Body of pancreas (tissue), 4 donors: ENCODE measurements at regions of chr5 and their contacts with region 1.

Region 1: DNA sequence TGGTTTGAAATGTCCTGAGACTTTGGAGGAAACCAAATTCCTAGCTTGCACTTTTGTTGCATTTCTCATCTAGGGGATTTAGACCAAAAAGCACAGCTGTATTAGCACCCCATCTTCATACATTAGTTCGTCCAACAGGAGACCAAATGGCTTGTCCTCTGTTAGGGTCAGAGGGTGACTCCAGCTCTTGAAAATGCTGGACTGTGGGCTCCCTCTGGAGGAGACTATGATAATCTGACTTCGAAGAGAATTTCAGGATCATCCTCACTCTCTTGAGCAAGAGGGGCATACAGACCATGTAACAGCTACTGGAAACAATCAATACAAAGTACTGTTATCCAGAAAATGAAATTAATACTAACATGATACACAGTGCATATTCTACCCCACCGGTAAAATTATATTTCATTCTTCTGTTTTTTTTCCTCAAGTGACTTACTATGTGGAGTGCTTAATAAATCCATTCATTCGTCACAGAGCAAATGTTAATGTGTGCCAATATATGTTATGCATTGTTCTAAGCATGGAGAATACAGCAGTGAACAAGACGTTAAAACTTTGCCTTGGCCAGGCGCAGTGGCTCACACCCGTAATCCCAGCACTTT is 63.7 kb upstream of the PPP2CA start:
- DNase-seq: peak; percentile 51 to 73 (median 56)
- ATAC-seq: peak; percentile 85
- H3K4me3 ChIP-seq: no peak overlapping the region
- H3K27ac ChIP-seq: no peak overlapping the region
- H3K4me1 ChIP-seq: no peaks in the 10 kb centered on the region
- H3K27me3 ChIP-seq: no peaks in the 10 kb centered on the region
- CTCF ChIP-seq: peak; percentile 35 to 86 (median 79)
- POLR2A ChIP-seq: no peak

Region 2: DNA sequence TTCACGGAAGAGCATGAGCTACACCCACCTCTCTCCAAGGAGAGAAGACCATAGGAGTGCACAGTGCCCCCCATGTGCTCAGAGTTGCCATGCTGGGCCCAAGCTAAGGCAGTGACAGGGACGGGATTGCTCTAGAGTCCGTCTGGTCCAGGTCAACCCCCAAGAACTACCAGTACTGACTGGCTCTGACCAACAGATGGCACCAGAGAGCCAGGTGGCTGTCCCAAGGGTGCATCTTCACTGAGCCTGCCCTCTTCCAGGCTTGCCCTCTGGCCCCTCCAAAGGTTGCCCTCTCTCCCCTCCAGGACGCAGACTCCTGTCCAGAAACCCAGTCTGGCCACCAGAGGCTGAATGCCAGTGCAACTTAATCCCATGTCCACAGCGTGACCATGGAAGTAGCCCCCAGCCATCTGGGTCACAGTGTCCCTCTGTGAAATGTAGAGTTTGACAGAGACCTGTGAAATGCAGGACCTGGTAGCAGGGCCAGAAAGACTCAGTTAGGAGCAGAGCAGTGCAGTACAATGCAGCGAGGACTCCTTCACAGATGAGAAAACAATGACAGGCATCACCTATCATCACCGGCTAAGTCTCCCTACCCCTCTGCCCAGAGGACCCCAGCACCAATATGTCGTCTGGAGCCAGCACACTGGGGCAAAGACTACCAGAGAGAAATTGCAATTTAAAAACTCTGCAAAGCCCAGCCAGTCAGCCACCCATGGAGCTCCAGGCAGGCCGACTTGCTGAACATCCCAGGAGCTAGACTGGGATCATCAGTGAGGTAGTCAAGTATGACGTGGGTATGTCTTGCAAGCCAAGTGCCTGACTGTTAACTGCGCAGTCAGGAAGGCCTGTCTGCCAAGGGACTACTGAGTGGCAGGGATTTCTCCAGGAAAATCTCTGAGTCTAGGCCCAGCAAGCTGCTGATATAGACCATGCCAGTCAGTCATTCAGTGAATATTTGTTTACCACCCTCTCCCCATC is 105.2 kb before region 1 on chr5:
- intact Hi-C with region 1: loop called (anchors 5 kb)
- DNase-seq: peak; percentile 70 to 74 (median 72)
- ATAC-seq: peak; percentile 76
- H3K4me3 ChIP-seq: no peak overlapping the region
- H3K27ac ChIP-seq: no peak overlapping the region
- H3K4me1 ChIP-seq: peaks cover 26% of the 10 kb centered on the region
- H3K27me3 ChIP-seq: no peaks in the 10 kb centered on the region
- CTCF ChIP-seq: peak; percentile 82 to 92 (median 87)
- POLR2A ChIP-seq: no peak

Region 3: DNA sequence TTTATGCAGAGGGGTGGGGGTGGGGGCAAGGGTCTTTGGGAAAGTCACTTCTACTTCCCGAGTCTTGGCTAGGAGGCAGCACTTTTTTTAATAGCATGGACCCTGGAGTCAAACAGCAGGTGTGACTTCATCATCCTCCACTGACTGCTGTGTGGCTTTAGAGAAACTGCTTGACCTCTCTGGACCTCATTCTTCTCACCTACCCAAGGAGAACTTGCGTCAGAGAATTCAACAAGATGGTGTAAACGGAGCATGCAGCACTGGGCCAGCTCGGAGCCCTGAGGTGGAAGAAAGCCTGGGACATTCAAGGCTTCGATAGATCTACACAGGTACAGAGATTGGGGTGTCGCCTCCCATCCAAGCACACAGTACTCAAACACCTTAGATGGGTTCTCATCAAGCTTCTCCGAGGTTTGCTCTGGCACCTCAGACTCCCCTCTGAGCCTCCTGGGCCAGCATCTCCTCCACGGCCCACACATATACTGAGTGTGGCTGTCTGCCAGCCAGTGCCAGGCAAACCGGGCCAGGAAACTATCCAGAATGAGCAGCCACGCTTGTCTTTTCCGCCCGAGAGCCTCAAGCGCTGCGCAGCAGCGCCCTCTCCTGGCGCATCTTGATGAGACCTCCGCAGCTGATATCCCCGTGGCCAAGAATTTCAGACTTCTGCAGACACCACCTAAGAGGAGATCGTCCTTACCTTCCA is 1540.2 kb after region 1 on chr5:
- intact Hi-C with region 1: no loop called
- DNase-seq: peak; percentile 66 to 79 (median 72)
- ATAC-seq: peak; percentile 27
- H3K4me3 ChIP-seq: no peak overlapping the region
- H3K27ac ChIP-seq: no peak overlapping the region
- H3K4me1 ChIP-seq: peaks cover 10% of the 10 kb centered on the region
- H3K27me3 ChIP-seq: no peaks in the 10 kb centered on the region
- CTCF ChIP-seq: peak; percentile 54 to 73 (median 66)
- POLR2A ChIP-seq: no peak